ENCODE measurements at regions of chr5 and their contacts with region 1.

Region 1: GRCh38 chr5:40361378-40361777 is 318.3 kb upstream of the PTGER4 start:
- DNase-seq: peak in 1 of 2 donors; percentile 65
- ATAC-seq: peak; percentile 83 to 94 (median 87)
- H3K4me3 ChIP-seq: peak overlapping the region; percentile 13
- H3K4me3 Mint-ChIP-seq: peak overlapping the region; percentile 87
- H3K27ac ChIP-seq: peak overlapping the region; percentile 61
- H3K27ac Mint-ChIP-seq: peak overlapping the region; percentile 71 to 90
- H3K4me1 ChIP-seq: peaks cover 9% of the 10 kb centered on the region
- H3K4me1 Mint-ChIP-seq: peaks cover 65 to 74% of the 10 kb centered on the region in 2 donors
- H3K27me3 ChIP-seq: no peaks in the 10 kb centered on the region
- H3K27me3 Mint-ChIP-seq: no peaks in the 10 kb centered on the region
- CTCF ChIP-seq: no peak

Region 2: DNA sequence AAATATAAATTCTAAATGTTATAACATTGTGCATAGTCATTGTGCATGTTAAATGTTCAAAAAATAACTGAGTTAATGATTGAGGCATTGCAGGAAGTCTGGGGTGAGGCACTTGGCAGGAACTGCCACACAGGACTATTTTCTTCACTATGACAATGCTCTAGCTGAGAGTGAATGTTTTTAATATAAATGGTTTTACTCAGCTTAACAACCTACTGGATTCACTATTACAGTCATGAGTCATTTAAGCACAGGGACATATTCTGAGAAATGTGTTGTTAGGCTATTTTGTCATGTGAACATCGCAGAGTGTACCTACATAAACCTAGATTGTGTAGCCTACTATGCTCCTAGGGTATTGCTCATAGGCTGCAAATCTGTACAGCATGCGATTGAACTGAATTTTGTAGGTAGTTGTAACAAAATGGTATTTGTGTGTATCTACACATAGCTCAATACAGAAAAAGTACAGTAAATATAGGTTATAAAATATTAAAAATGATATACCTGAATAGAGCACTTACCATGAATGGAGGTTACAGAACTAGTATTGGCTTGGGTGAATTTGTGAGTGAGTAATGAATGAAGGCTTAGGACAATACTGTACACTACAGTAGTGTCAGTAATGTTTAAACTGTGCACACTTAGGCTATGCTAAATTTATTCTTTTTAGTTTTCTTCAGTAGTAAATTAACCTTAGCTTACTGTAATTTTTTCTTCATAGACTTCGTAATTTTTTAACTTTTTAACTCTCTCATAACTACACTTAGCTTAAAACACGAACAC is 27.7 kb before region 1 on chr5:
- intact Hi-C with region 1: loop called (anchors 1 kb)
- DNase-seq: peak in 1 of 2 donors; percentile 10
- ATAC-seq: peak; percentile 60 to 86 (median 75)
- H3K4me3 ChIP-seq: no peak overlapping the region
- H3K4me3 Mint-ChIP-seq: no peak overlapping the region
- H3K27ac ChIP-seq: no peak overlapping the region
- H3K27ac Mint-ChIP-seq: peak overlapping the region in 1 of 2 donors; percentile 26
- H3K4me1 ChIP-seq: peaks cover 17% of the 10 kb centered on the region
- H3K4me1 Mint-ChIP-seq: peaks cover 43% of the 10 kb centered on the region in 2 donors
- H3K27me3 ChIP-seq: no peaks in the 10 kb centered on the region
- H3K27me3 Mint-ChIP-seq: no peaks in the 10 kb centered on the region
- CTCF ChIP-seq: no peak

Region 3: GRCh38 chr5:40347981-40348725 is 13.2 kb before region 1 on chr5:
- intact Hi-C with region 1: no loop called
- DNase-seq: no peak
- ATAC-seq: no peak
- H3K4me3 ChIP-seq: no peak overlapping the region
- H3K4me3 Mint-ChIP-seq: no peak overlapping the region
- H3K27ac ChIP-seq: no peak overlapping the region
- H3K27ac Mint-ChIP-seq: no peak overlapping the region
- H3K4me1 ChIP-seq: no peaks in the 10 kb centered on the region
- H3K4me1 Mint-ChIP-seq: no peaks in the 10 kb centered on the region
- H3K27me3 ChIP-seq: no peaks in the 10 kb centered on the region
- H3K27me3 Mint-ChIP-seq: no peaks in the 10 kb centered on the region
- CTCF ChIP-seq: no peak

Region 4: DNA sequence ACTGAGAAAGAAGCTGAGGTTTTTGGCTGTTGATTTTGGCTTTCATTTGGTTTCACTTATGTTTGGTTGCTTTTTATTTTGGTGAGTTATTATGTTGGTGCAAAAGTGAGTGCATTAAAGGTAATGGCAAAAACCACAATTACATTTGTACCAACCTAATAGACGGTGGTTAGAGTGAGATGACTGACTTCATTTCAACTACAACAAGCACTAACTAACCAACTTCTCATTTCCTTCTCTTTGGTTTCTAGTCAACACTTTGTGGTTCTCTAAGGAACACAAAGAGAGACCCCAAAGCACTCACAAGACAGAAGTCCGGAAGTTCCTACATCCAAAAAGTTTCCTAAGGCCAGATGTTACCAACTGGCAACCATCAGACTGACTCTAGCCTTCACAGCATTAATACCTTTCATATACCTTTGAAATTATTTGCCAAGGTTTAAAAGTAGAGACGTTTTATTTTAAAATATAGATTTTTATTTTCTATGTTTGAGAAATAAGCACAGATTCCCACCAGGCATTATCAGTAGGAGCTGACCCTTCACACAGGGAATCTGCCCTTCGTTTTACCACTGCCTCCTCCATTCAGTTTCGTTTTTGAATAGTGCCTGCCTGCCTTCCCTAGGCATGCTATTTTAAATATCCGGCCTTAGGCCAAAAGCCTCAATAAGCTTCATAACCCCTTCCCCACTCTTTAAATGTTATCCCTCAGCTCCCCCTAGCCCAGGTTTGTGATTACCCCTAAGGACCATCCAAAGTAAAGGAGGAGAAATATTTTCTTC is 17.2 kb after region 1 on chr5:
- intact Hi-C with region 1: loop called (anchors 2 kb)
- DNase-seq: peak in 1 of 2 donors; percentile 68
- ATAC-seq: peak; percentile 79 to 88 (median 80)
- H3K4me3 ChIP-seq: no peak overlapping the region
- H3K4me3 Mint-ChIP-seq: peak overlapping the region; percentile 43
- H3K27ac ChIP-seq: peak overlapping the region; percentile 73
- H3K27ac Mint-ChIP-seq: peak overlapping the region; percentile 79 to 90
- H3K4me1 ChIP-seq: peaks cover 11% of the 10 kb centered on the region
- H3K4me1 Mint-ChIP-seq: peaks cover 29 to 31% of the 10 kb centered on the region in 2 donors
- H3K27me3 ChIP-seq: no peaks in the 10 kb centered on the region
- H3K27me3 Mint-ChIP-seq: peaks cover 0 to 6% of the 10 kb centered on the region in 2 donors
- CTCF ChIP-seq: no peak

Region 5: DNA sequence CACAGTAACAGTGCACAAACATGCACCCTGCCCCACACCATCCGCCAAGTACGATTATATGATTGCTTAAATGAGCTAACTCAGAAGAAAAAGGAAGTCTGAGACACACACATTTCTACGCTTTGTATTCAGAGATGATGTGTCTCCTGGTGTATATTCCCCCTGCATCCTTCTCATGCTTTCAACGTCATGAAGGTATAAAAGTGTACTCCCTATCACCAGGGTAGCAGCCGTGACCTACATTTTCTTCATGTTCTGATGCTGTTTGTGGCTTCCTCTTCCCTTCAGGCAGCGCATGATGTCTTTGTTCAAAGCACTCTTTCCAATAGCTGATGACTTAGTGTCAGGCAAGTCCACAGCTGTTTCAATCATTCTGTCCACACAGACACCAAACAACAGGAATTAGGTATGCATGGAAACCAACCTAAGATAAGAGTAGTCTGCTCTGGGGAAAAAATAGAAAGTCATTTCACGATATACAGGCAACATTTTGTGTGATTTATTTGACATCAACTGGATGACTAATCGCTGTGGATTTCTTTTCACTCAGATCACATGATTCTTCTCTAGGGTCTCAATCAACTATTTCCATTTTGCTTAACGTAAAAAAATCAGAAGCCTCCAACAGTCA is 49.0 kb after region 1 on chr5:
- intact Hi-C with region 1: loop called (anchors 2 kb)
- DNase-seq: peak; percentile 52 to 95
- ATAC-seq: peak; percentile 83 to 92 (median 89)
- H3K4me3 ChIP-seq: no peak overlapping the region
- H3K4me3 Mint-ChIP-seq: peak overlapping the region; percentile 78
- H3K27ac ChIP-seq: peak overlapping the region; percentile 95
- H3K27ac Mint-ChIP-seq: peak overlapping the region; percentile 88 to 95
- H3K4me1 ChIP-seq: peaks cover 33% of the 10 kb centered on the region
- H3K4me1 Mint-ChIP-seq: peaks cover 57 to 62% of the 10 kb centered on the region in 2 donors
- H3K27me3 ChIP-seq: no peaks in the 10 kb centered on the region
- H3K27me3 Mint-ChIP-seq: no peaks in the 10 kb centered on the region
- CTCF ChIP-seq: no peak

Region 6: GRCh38 chr5:40570408-40571129 is 209.2 kb after region 1 on chr5:
- intact Hi-C with region 1: loop called (anchors 5 kb)
- DNase-seq: peak in 1 of 2 donors; percentile 8
- ATAC-seq: peak; percentile 82 to 94 (median 92)
- H3K4me3 ChIP-seq: no peak overlapping the region
- H3K4me3 Mint-ChIP-seq: peak overlapping the region; percentile 66
- H3K27ac ChIP-seq: no peak overlapping the region
- H3K27ac Mint-ChIP-seq: peak overlapping the region; percentile 73 to 74
- H3K4me1 ChIP-seq: peaks cover 4% of the 10 kb centered on the region
- H3K4me1 Mint-ChIP-seq: peaks cover 21 to 27% of the 10 kb centered on the region in 2 donors
- H3K27me3 ChIP-seq: no peaks in the 10 kb centered on the region
- H3K27me3 Mint-ChIP-seq: no peaks in the 10 kb centered on the region
- CTCF ChIP-seq: no peak

Region 7: DNA sequence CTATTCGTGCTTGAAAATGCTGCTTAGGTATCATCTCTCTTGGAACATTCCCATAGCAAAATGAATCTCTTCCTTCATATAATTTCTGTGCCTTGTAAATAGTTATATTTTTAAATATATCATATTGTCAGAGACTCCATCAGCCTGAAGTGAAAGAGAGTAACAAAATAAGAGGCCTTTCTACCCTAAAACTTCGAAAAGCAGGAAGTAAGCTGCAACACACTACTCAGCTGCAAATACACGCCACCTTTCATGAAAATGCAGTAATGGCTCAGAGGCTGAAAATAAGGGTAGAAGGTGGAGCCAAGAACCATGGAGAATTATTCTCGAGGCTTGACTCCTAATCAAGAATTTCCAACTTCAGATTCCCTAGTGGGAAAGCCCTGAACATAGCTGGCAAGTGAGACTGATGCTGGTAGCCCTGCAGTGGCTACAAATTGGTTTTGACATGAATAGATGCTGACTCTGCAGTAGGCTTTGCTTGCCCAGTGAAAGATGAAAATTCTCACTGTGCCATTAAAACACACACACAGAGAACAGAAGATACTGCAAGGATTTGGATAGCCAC is 288.2 kb after region 1 on chr5:
- intact Hi-C with region 1: no loop called
- DNase-seq: peak in 1 of 2 donors; percentile 57
- ATAC-seq: peak in 1 of 3 donors; percentile 31
- H3K4me3 ChIP-seq: no peak overlapping the region
- H3K4me3 Mint-ChIP-seq: no peak overlapping the region
- H3K27ac ChIP-seq: peak overlapping the region; percentile 38
- H3K27ac Mint-ChIP-seq: peak overlapping the region in 1 of 2 donors; percentile 60
- H3K4me1 ChIP-seq: peaks cover 25% of the 10 kb centered on the region
- H3K4me1 Mint-ChIP-seq: peaks cover 47 to 51% of the 10 kb centered on the region in 2 donors
- H3K27me3 ChIP-seq: no peaks in the 10 kb centered on the region
- H3K27me3 Mint-ChIP-seq: no peaks in the 10 kb centered on the region
- CTCF ChIP-seq: no peak

Region 8: GRCh38 chr5:40679155-40679913 is 318.0 kb after region 1 on chr5:
- intact Hi-C with region 1: loop called (anchors 2 kb)
- DNase-seq: peak; percentile 80 to 94
- ATAC-seq: peak; percentile 68 to 84 (median 77)
- H3K4me3 ChIP-seq: peak overlapping the region; percentile 73
- H3K4me3 Mint-ChIP-seq: peak overlapping the region; percentile 99
- H3K27ac ChIP-seq: peak overlapping the region; percentile 88
- H3K27ac Mint-ChIP-seq: peak overlapping the region; percentile 91 to 95
- H3K4me1 ChIP-seq: peaks cover 28% of the 10 kb centered on the region
- H3K4me1 Mint-ChIP-seq: peaks cover 87 to 91% of the 10 kb centered on the region in 2 donors
- H3K27me3 ChIP-seq: no peaks in the 10 kb centered on the region
- H3K27me3 Mint-ChIP-seq: no peaks in the 10 kb centered on the region
- CTCF ChIP-seq: no peak